ENCODE measurements at regions of chr1 and their contacts with region 1.

Region 1: DNA sequence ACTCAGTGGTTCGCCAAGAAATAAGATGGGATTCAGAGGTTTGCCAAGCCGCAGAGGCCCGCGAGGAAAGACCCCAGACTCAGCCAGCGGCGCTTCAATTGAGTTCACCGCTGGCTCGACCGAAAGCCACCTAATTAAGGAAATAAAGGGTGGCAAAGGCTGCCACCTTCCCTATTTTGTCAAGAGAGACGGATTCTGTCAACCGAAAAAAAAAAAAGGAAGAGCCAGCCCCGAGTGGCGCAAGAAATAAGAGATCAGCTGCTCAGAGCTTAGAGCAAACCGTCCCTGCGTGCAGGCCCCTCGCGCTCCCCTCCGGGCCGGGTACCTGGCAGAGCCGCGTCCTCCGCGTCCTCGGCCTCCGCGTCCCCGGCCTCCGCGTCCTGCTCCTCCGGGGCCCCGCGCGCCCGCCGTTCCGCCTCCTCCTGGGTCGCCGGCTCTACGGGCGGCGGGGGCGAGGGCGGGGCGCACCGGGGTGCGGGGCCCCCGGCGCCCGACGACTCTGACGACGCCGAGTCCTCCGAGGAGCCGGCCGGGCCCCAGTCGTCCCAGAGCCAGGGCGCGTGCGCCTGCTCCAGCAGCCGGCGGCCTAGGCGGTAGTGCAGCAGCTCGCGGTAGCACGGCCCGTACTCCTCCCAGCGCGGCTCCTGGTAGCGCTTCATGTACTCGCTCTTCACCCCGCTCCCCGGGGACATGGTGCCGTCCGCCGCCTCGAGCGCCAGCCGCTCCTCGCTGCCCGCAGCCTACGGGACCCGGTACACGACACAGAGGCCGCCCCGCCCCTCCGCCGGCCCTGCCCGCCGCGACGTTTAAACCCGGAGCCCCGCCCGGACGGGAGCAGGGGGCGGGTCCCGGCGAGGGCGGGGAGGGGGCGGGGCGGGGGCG is 832 bp downstream of the CCSAP start:
- DNase-seq: peak; percentile 85
- ATAC-seq: peak; percentile 76
- H3K4me3 Mint-ChIP-seq: peak overlapping the region; percentile 88
- H3K27ac Mint-ChIP-seq: peak overlapping the region; percentile 77
- H3K4me1 Mint-ChIP-seq: peaks cover 45% of the 10 kb centered on the region
- H3K27me3 Mint-ChIP-seq: peaks cover 9% of the 10 kb centered on the region

Region 2: DNA sequence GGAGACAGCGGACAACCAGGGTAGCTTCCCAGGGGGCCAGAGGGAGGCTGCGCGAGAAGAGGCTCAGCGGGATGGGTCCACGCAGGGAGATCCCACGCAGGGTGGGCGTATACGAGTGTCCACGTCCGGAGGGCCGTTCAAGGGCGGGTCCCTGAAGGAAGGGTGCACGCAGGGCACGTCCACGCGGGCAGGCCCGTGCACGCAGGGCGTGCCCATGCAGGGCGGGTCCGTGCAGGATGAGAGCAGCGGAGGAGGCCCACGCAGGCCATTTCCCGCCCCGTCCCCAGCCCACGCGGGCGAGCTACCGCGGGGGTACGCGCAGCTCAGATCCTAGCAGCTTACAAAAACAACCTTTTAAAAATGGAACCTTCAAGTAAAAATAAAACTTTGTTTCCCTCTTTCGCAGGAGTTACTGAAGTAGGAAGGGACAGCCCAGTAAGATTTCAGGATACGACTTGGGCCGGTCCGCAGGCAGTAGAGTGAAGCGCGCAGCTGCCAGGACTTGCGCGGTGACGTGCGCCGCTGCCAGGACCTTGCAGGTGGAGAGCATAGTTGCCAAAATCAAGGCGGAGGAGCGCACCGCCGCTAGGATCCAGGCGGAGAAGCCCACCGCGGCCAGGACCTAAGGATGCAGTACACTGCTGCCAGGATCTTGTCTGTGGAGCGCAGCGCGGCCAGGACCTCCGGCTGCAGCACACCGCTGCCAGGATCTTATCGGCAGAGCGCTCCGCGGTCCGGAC is 855.2 kb before region 1 on chr1:
- CTCF ChIA-PET with region 1: no interaction called
- POLR2A ChIA-PET with region 1: no interaction called
- intact Hi-C with region 1: loop called in 1 of 2 experiments (anchors 10 kb)
- DNase-seq: peak; percentile 87
- ATAC-seq: peak; percentile 66
- H3K4me3 Mint-ChIP-seq: peak overlapping the region; percentile 96
- H3K27ac Mint-ChIP-seq: peak overlapping the region; percentile 99
- H3K4me1 Mint-ChIP-seq: peaks cover 40% of the 10 kb centered on the region
- H3K27me3 Mint-ChIP-seq: no peaks in the 10 kb centered on the region

Region 3: DNA sequence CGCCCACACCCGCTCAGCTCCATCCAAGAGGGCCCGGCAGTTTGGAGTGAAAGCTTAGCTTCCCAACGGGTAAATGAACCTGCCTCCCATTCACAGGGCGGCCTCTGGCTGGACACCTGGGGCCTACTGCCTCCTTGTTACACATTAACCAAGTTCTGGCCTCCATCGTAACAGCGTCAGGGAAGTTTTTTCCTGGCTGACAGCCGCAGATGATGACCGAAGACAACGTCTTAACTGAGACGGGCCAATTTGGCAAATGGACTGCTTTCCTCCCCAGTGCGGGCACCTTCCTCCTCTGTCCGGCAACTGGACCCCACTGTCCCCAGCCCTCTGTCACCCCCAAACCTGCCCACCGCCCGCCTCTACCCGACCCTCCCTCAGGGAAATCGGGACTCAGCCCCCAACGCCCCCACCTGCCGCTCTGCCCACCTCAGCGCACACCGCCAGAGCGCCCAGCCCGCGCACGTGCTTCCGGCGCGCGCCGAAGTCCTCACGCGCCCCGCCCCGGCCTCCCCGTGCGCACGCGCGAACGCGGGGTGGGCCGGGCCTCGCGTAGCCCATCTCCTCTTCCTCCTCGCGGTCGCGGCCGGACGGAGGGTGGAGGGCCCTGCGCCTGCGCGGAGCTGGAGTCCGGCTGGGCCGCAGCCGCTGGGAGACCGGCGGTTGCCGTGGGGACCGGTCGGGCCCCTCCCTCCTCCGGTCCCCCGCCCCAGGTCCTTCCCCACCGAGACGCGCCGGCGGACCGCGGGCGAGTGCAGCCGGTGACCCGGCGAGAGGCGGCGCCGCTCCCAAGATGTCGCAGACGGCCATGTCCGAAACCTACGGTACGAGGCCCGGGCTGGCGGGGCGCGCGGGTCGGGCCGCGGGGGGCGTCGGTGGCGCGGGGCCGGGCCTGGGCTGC is 71.2 kb before region 1 on chr1 and contains the start of gene RAB4A:
- CTCF ChIA-PET with region 1: no interaction called
- POLR2A ChIA-PET with region 1: no interaction called
- intact Hi-C with region 1: loop called in 1 of 2 experiments (anchors 1 kb)
- DNase-seq: peak; percentile 84
- ATAC-seq: peak; percentile 87
- H3K4me3 Mint-ChIP-seq: peak within 1 kb of the TSS; percentile 82
- H3K27ac Mint-ChIP-seq: peak within 1 kb of the TSS; percentile 71
- H3K4me1 Mint-ChIP-seq: peaks cover 31% of the 10 kb centered on the region
- H3K27me3 Mint-ChIP-seq: no peaks in the 10 kb centered on the region
- total RNA-seq, gene RAB4A: 22.1 to 24.0 TPM

Region 4: DNA sequence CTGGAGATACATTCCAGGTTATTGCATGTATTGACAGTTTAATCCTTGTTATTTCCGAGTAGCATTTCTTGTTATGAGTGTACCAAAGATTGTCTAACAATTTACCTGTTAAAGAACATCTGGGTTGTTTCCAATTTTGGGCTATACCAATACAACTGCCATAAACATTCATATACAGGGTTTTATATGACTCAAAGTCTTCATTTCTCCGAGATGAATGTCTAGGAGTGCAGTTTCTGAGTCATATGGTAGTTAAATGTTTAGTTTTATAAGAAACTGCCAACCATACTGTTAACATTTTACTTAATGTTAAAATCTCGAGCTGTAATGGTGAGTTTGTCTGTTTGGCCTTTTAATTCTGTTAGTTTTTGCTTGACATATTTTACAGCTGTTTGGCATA is 61.1 kb before region 1 on chr1:
- CTCF ChIA-PET with region 1: no interaction called
- POLR2A ChIA-PET with region 1: no interaction called
- intact Hi-C with region 1: loop called (anchors 2 to 5 kb)
- DNase-seq: no peak
- ATAC-seq: peak; percentile 85
- H3K4me3 Mint-ChIP-seq: no peak overlapping the region
- H3K27ac Mint-ChIP-seq: no peak overlapping the region
- H3K4me1 Mint-ChIP-seq: peaks cover 36% of the 10 kb centered on the region
- H3K27me3 Mint-ChIP-seq: no peaks in the 10 kb centered on the region

Region 5: DNA sequence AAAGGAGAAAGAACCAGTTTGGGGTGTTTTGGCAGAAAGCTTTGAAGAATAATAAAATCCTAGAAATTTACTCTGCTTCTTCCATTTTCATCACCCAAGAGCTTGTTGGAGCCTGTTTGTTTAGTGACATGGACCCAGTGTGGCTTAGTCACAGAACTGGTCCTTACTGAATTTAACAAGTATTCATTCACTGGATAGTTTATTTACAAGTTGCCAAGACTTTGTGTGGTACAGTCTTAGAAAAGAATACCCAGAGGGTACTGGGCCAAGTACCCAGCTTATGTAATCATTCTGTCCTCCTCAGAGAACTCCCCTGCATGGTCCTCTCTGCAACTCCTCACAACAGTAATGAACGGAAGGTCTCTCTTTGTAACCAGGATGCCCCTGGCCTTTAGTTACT is 54.7 kb before region 1 on chr1:
- CTCF ChIA-PET with region 1: no interaction called
- POLR2A ChIA-PET with region 1: no interaction called
- intact Hi-C with region 1: loop called in 1 of 2 experiments (anchors 5 kb)
- DNase-seq: no peak
- ATAC-seq: no peak
- H3K4me3 Mint-ChIP-seq: no peak overlapping the region
- H3K27ac Mint-ChIP-seq: no peak overlapping the region
- H3K4me1 Mint-ChIP-seq: peaks cover 29% of the 10 kb centered on the region
- H3K27me3 Mint-ChIP-seq: no peaks in the 10 kb centered on the region

Region 6: DNA sequence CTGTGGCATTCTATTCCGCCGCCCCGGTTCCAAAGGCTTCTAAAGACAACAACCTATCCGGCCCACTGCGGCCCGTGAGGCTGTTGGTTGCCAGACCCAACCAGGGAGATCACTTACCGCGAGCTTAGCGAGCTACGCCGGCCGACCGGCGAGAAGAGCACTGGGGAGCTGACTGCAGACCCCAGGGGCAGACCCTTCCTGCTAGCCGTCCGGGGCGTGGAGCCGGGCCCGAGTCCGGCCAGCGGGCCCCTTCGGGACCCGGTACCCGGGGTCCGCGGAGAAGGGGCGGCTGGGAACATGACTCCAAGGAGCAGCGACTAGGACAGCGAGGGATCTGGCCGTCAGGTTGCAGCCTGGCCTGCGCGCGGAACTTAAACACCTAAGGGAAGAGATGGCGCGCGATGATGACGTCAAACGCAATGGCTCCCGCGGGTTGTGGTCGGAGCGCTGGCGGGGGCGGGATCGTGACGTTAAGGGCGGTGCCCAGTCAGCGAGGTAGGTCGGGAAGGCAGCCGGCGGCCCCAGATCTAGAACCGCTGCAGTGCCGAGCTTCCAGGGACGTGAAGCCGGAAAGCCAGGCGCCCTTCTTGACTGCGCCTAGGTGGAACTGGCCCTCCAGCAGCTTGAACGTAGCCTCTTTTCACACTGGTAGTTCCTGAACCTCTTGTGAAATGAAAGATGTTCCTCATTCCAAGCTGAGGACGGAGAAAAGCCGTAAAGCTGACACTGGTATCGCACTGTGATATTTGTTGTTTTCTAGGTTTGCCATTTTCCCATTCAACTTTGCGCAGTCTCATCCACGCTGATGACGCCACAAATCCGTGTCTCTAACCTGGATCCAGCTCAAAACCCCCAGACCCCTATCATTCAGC is 166.2 kb after region 1 on chr1 and contains the start of gene NUP133:
- CTCF ChIA-PET with region 1: no interaction called
- POLR2A ChIA-PET with region 1: no interaction called
- intact Hi-C with region 1: loop called (anchors 1 to 2 kb)
- DNase-seq: peak; percentile 100
- ATAC-seq: peak; percentile 95
- H3K4me3 Mint-ChIP-seq: peak within 1 kb of the TSS; percentile 95
- H3K27ac Mint-ChIP-seq: peak within 1 kb of the TSS; percentile 92
- H3K4me1 Mint-ChIP-seq: peaks cover 24% of the 10 kb centered on the region
- H3K27me3 Mint-ChIP-seq: no peaks in the 10 kb centered on the region
- total RNA-seq, gene NUP133: 53.5 to 57.5 TPM

Region 7: GRCh38 chr1:229625915-229626831 is 284.2 kb after region 1 on chr1 and contains the starts of genes TAF5L and URB2:
- CTCF ChIA-PET with region 1: no interaction called
- POLR2A ChIA-PET with region 1: no interaction called
- intact Hi-C with region 1: loop called in 1 of 2 experiments (anchors 1 kb)
- DNase-seq: peak; percentile 93
- ATAC-seq: peak; percentile 92
- H3K4me3 Mint-ChIP-seq: peak within 1 kb of the TSS; percentile 89
- H3K27ac Mint-ChIP-seq: peak within 1 kb of the TSS; percentile 96
- H3K4me1 Mint-ChIP-seq: peaks cover 57% of the 10 kb centered on the region
- H3K27me3 Mint-ChIP-seq: no peaks in the 10 kb centered on the region
- total RNA-seq, gene TAF5L: 16.5 to 17.6 TPM
- total RNA-seq, gene URB2: 13.9 to 16.5 TPM

Measured in activated CD4-positive, alpha-beta T cell treated with anti-CD3 and anti-CD28 coated beads for 36 hours (primary cell).